ENCODE measurements at regions of chr9 and their contacts with region 1.

Region 1: DNA sequence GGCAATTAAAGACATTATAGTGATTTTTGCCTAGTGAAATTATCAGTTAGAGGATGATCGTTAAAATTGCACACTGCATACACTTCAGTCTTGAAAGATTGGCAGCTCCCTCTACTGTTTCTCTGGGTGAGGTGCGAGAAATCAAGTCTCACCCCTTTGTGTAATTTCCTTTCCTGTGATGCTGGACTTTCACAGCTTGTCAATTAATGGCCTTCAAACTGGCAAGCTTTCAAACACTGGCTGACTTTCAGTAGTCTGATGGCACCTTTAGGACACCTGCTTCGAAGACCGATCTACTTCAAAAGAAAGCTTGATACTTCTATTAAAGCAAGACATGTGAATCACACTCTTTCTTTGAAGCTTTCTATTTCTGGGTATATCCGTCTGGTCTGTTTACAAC is 706.7 kb upstream of the PTPRD start:
- DNase-seq: peak; percentile 46
- H3K4me3 ChIP-seq: no peak overlapping the region
- H3K27ac ChIP-seq: no peak overlapping the region
- H3K4me1 ChIP-seq: no peaks in the 10 kb centered on the region
- H3K27me3 ChIP-seq: no peaks in the 10 kb centered on the region
- CTCF ChIP-seq: peak; percentile 57

Region 2: DNA sequence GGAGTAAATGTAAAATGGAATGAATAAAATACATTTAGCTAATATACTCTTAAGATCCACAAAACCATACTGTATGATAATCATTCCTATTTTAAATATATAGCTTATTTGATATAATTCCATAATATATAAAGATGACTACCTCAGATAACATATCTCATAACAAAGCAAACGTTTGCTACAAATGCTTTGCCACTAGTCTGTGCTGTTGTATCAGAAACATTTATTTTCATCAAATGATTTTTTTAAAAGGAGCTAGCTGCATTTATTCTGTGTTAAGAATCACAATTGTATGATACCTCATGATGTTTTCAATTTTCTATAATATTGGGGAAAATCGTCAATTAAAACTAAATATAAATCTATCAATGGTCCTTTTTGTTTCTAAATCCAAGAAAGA is 1273.9 kb before region 1 on chr9:
- CTCF ChIA-PET with region 1: no interaction called
- POLR2A ChIA-PET with region 1: no interaction called
- intact Hi-C with region 1: loop called (anchors 10 kb)
- DNase-seq: peak; percentile 14
- H3K4me3 ChIP-seq: no peak overlapping the region
- H3K27ac ChIP-seq: no peak overlapping the region
- H3K4me1 ChIP-seq: no peaks in the 10 kb centered on the region
- H3K27me3 ChIP-seq: no peaks in the 10 kb centered on the region
- CTCF ChIP-seq: peak; percentile 51

Measured in A673 (cell line).